ENCODE measurements at regions of chr6 and their contacts with region 1.

Region 1: DNA sequence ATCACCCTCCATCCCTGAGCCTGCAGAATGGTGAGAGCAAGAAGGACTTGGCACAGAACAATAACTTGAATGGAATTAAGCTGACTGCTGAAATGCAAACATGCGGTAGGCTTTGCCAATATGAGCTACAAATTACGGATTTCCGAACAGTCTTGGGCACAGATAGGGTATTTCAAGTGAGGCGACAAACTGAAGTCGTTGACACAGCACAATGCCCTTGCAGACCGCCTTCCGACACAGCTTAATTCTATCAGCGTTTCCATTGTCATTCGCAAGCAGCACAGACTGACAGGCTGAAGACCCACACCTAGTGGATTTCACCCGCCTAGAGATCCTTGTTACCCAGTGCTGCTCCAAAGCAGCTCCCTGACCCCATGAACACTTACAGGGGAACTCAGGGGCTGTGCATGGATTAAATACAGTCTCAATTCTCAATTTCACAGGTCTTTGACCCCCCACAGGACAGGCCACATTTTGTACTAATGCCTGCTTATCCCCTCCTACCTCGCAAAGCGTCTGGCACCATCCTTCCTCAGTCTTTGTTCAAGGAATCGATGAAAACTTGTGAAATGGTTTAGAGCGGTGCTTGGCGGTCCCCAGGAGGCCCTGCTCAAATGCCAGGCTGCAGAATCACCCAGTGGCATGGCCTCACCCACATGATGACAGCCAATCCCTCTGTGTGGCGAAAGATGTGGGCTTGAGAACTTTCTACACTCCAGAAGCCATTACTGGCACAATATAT is 34.6 kb downstream of the RAMACL start:
- DNase-seq: no peak
- H3K4me3 ChIP-seq: no peak overlapping the region
- H3K27ac ChIP-seq: no peak overlapping the region
- H3K4me1 ChIP-seq: no peaks in the 10 kb centered on the region
- H3K27me3 ChIP-seq: no peaks in the 10 kb centered on the region
- CTCF ChIP-seq: no peak
- POLR2A ChIP-seq: no peak

Region 2: DNA sequence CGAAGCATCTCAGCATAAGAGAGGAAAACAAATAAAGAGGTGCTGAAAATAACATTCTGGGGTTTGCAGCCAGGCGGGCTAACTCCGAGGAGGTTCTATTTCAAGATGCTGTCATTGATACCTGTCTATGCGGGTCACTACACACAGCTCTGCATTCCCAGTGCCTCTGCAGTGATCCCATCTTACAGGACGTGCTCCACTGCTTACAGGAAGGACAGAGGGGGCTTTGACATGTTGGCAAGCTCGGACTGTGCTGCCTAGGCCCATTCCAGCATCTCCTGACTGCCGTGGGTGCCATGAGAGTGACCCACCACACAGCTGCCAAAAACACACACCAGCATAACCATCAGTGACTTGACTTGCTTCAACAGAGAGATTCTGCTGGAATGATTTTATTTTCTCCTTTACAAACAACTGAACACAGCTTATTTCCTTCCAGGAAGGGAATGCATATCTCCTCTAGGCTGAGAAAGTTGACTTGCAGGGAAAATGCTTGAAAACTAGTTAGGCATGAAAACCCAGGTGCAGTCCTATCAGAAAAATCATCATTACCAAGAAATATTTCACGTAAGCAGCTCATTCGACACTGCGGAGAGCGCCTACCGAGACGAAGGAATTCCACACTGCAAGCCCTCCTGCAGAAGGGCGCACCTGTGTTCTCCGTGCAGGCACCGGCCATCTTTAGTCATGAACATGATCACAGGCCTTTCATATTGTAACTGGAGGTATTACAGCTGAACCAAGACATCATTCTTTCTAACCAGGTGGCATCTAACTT is 28.0 kb before region 1 on chr6:
- intact Hi-C with region 1: loop called (anchors 2 kb)
- DNase-seq: no peak
- H3K4me3 ChIP-seq: no peak overlapping the region
- H3K27ac ChIP-seq: no peak overlapping the region
- H3K4me1 ChIP-seq: no peaks in the 10 kb centered on the region
- H3K27me3 ChIP-seq: no peaks in the 10 kb centered on the region
- CTCF ChIP-seq: no peak
- POLR2A ChIP-seq: no peak